Activated CD4-positive, alpha-beta memory T cell treated with anti-CD3 and anti-CD28 coated beads for 36 hours (primary cell): ENCODE measurements at regions of chr17 and their contacts with region 1.

Region 1: DNA sequence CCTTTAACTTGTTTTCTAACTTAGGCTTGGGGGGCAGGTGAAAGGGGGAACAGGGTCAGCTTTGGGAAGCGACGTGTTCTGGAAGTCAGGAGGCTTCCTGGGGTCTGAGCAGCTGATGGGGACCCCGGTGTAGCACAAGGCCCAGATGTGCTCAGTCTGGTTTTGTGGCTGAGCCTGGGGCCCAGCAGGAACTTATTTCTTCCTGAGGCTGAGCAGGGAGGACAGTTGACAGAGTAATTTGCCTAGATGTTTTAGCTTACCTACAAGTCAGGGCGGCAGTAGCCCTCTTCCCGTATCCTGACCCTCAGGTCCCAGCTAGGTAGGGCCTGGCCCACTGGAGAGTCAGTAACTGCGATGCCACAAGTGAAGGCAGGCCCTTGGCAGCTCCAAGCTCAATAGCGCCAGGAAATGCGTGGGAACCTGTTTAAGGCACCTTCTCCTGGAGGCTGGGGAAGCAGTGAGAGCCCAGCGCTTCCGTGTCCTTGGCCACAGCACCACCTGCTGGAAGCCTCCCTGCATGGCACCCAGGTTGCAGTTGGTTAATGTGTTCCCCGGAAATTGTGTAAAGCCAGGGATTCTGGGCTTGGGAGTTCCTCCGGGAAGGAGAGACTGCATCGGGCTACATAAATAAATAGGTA is 5.2 kb downstream of the CCR7 start:
- DNase-seq: peak; percentile 90
- H3K4me3 Mint-ChIP-seq: peak overlapping the region; percentile 93
- H3K27ac Mint-ChIP-seq: peak overlapping the region; percentile 96
- H3K4me1 Mint-ChIP-seq: peaks cover 80% of the 10 kb centered on the region
- H3K27me3 Mint-ChIP-seq: no peaks in the 10 kb centered on the region

Region 2: GRCh38 chr17:40317880-40318829 is 241.9 kb before region 1 on chr17:
- CTCF ChIA-PET with region 1: interaction called, 4 read pairs
- POLR2A ChIA-PET with region 1: interaction called, 3 read pairs
- intact Hi-C with region 1: loop called (anchors 2 kb)
- DNase-seq: peak; percentile 95
- H3K4me3 Mint-ChIP-seq: peak overlapping the region; percentile 99
- H3K27ac Mint-ChIP-seq: peak overlapping the region; percentile 99
- H3K4me1 Mint-ChIP-seq: peaks cover 80% of the 10 kb centered on the region
- H3K27me3 Mint-ChIP-seq: peaks cover 2% of the 10 kb centered on the region

Region 3: DNA sequence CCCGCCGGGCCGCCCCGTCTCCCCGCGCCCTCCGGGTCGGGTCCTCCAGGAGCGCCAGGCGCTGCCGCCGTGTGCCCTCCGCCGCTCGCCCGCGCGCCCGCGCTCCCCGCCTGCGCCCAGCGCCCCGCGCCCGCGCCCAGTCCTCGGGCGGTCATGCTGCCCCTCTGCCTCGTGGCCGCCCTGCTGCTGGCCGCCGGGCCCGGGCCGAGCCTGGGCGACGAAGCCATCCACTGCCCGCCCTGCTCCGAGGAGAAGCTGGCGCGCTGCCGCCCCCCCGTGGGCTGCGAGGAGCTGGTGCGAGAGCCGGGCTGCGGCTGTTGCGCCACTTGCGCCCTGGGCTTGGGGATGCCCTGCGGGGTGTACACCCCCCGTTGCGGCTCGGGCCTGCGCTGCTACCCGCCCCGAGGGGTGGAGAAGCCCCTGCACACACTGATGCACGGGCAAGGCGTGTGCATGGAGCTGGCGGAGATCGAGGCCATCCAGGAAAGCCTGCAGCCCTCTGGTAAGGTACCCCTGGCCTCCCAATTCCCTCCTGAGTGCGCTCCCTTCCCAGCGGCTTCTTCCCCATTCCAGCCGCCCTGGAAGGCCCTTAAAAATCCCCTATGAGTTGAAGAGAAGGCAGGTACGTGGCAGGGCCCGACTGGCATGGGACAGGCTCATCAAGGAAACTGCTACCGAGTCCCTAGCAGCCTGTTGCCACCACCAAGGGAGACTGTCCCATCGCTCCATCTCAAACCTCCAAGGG is 116.3 kb before region 1 on chr17:
- CTCF ChIA-PET with region 1: interaction called, 21 read pairs
- POLR2A ChIA-PET with region 1: no interaction called
- intact Hi-C with region 1: loop called (anchors 1 kb)
- DNase-seq: peak; percentile 76
- H3K4me3 Mint-ChIP-seq: peak overlapping the region; percentile 65
- H3K27ac Mint-ChIP-seq: peak overlapping the region; percentile 82
- H3K4me1 Mint-ChIP-seq: peaks cover 41% of the 10 kb centered on the region
- H3K27me3 Mint-ChIP-seq: peaks cover 1% of the 10 kb centered on the region

Region 4: GRCh38 chr17:40499551-40500174 is 60.4 kb before region 1 on chr17:
- CTCF ChIA-PET with region 1: no interaction called
- POLR2A ChIA-PET with region 1: no interaction called
- intact Hi-C with region 1: no loop called
- DNase-seq: no peak
- H3K4me3 Mint-ChIP-seq: no peak overlapping the region
- H3K27ac Mint-ChIP-seq: no peak overlapping the region
- H3K4me1 Mint-ChIP-seq: peaks cover 4% of the 10 kb centered on the region
- H3K27me3 Mint-ChIP-seq: peaks cover 1% of the 10 kb centered on the region

Region 5: DNA sequence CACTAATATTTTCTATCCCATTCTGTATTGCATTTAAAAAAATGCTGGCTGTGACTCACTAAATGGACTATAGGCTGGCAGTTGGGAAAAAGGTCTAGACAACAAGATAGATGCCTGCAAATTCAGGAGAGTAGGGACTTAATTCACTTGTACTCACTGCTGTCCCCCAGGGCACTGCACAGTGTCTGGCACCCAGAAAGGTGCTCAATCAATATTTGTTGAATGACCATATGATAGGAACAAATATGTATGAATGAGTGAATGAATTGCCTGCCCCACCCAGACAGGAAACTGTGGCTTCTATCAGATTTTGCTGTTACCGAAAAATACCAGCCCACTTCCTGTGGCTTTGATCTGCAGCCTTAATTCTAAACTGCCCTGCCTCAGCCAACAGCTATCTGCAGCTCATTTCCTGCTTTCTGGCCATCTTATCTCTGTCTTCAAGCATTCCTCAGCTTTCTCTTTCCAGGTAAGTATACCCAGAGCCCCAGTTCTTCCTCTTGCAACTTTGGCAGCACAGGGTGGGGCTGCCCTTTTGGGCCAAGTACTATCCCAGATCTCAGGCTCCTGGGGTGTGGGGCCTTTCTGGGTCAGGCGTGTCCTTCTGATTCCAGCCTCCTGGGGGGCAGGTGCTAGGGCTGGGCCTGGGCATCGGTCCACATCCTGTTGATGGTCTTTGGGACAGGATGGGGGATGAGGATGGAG is 43.3 kb before region 1 on chr17:
- CTCF ChIA-PET with region 1: interaction called, 3 read pairs
- POLR2A ChIA-PET with region 1: interaction called, 4 read pairs
- intact Hi-C with region 1: loop called (anchors 1 kb)
- DNase-seq: peak; percentile 83
- H3K4me3 Mint-ChIP-seq: peak overlapping the region; percentile 82
- H3K27ac Mint-ChIP-seq: peak overlapping the region; percentile 85
- H3K4me1 Mint-ChIP-seq: peaks cover 60% of the 10 kb centered on the region
- H3K27me3 Mint-ChIP-seq: no peaks in the 10 kb centered on the region

Region 6: GRCh38 chr17:40590742-40591141 is 30.7 kb after region 1 on chr17:
- CTCF ChIA-PET with region 1: interaction called, 47 read pairs
- POLR2A ChIA-PET with region 1: interaction called, 6 read pairs
- intact Hi-C with region 1: no loop called
- DNase-seq: no peak
- H3K4me3 Mint-ChIP-seq: no peak overlapping the region
- H3K27ac Mint-ChIP-seq: no peak overlapping the region
- H3K4me1 Mint-ChIP-seq: peaks cover 54% of the 10 kb centered on the region
- H3K27me3 Mint-ChIP-seq: no peaks in the 10 kb centered on the region

Region 7: DNA sequence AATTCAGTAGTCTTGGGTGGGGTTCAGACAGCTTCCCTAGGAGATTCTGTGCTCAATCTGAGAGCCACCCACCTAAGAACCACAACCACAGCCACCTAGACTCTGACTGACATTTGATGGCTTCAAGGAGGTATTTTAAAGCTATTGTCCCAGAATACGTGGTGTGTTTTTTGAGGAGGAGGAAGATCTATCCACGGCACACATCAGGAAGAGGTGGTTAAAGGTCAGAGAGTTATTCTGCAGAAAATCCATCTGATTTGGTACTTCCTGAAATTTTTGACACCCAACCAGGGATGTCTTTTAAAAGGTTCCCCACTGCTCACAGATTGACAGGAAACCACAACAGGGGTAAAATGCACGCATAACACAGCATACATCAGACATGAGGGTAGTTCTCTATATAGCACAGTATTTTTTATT is 62.4 kb after region 1 on chr17:
- CTCF ChIA-PET with region 1: interaction called, 172 read pairs
- POLR2A ChIA-PET with region 1: interaction called, 16 read pairs
- intact Hi-C with region 1: no loop called
- DNase-seq: peak; percentile 38
- H3K4me3 Mint-ChIP-seq: no peak overlapping the region
- H3K27ac Mint-ChIP-seq: no peak overlapping the region
- H3K4me1 Mint-ChIP-seq: peaks cover 60% of the 10 kb centered on the region
- H3K27me3 Mint-ChIP-seq: no peaks in the 10 kb centered on the region